ENCODE measurements at regions of chr9 and their contacts with region 1.

Region 1: DNA sequence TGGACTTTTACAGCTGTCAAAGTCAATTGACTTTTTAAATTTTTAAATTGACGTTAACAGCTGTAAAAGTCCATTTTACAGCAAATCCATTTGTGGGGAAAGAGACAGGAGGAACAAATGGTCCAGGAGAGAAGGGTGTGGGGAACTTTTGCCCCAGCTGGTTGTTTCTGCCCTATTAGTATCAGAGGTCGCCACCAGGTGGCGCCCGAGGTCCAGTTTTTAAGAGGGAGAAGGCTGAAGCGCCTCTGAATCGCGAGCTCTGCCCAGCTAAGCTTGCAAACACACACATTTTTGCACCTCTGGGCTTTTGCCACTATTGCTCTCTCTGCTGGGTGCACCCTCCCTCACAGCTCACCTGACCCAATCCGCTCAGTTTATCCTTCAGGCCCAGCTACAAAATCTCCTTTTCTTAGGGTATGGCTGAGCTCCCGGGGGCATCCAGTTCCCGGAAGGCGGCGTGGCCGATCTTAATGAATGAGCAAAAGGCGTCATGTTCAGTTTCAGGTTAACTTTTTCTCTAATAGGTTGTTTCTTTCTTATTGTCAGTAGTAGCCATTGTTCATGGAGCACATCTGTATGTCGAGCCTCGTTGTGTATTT is 6.3 kb upstream of the TTLL11 start:
- DNase-seq: peak; percentile 69 to 71
- ATAC-seq: peak; percentile 81 to 92
- H3K4me3 ChIP-seq: no peak overlapping the region
- H3K27ac ChIP-seq: no peak overlapping the region
- H3K4me1 ChIP-seq: no peaks in the 10 kb centered on the region
- CTCF ChIP-seq: peak; percentile 89
- EP300 ChIP-seq: no peak
- POLR2A ChIP-seq: no peak
- RAD21 ChIP-seq: peak; percentile 82 to 84

Region 2: GRCh38 chr9:121584411-121584810 is 515.0 kb before region 1 on chr9:
- CTCF ChIA-PET with region 1: no interaction called
- POLR2A ChIA-PET with region 1: no interaction called
- DNase-seq: no peak
- ATAC-seq: no peak
- H3K4me3 ChIP-seq: no peak overlapping the region
- H3K27ac ChIP-seq: no peak overlapping the region
- H3K4me1 ChIP-seq: no peaks in the 10 kb centered on the region
- CTCF ChIP-seq: no peak
- EP300 ChIP-seq: no peak
- POLR2A ChIP-seq: no peak
- RAD21 ChIP-seq: no peak

Region 3: DNA sequence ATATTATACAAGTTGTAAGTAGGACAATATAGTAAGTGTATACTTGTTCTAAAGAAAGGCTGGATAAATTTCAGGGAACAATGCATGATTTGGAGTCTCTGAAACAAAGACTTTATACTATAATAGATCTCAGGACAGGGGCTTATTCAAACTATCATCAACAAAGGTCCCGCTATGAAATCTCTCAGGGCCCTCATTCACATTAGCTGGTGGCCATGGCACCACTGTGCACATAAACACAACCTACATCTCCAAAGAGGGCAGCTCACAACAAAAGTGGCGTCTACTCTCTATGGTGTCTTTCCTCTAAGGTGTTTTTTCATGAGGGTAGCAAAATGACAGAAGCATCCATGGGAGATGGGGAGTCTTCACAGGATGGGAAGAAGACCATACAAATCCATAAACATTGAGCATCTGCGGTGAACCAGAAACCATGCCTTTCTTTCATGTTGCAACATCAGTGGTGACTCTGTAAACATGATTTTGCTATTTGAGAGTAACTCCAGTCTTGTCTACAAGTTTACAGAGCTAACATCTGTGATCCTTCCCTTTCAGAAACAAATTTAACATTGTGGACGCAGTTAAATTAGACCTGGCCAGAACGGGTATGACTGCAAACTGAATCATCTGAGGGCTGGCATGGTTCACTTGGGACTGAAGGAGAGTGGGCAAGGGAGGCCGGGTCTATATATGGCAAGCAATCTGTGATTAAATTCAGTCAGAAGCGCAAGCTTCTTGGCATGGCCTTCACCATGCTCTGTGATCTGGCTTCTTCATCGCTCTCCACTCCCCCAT is 11.8 kb before region 1 on chr9:
- CTCF ChIA-PET with region 1: interaction called, 26 read pairs
- POLR2A ChIA-PET with region 1: no interaction called
- DNase-seq: no peak
- ATAC-seq: no peak
- H3K4me3 ChIP-seq: no peak overlapping the region
- H3K27ac ChIP-seq: no peak overlapping the region
- H3K4me1 ChIP-seq: peaks cover 6% of the 10 kb centered on the region; the same call in 2 of the 3 replicates
- CTCF ChIP-seq: no peak
- EP300 ChIP-seq: no peak
- POLR2A ChIP-seq: no peak
- RAD21 ChIP-seq: no peak

Region 4: GRCh38 chr9:122131401-122132001 is 32.1 kb after region 1 on chr9:
- CTCF ChIA-PET with region 1: interaction called, 385 read pairs
- POLR2A ChIA-PET with region 1: no interaction called
- DNase-seq: no peak
- ATAC-seq: peak in 1 of 2 experiments; percentile 17; a peak in 1 of 6 replicates
- H3K4me3 ChIP-seq: no peak overlapping the region
- H3K27ac ChIP-seq: no peak overlapping the region
- H3K4me1 ChIP-seq: no peaks in the 10 kb centered on the region; the same call in 2 of the 3 replicates
- CTCF ChIP-seq: no peak
- EP300 ChIP-seq: no peak
- POLR2A ChIP-seq: no peak
- RAD21 ChIP-seq: no peak

Region 5: GRCh38 chr9:122264360-122265148 is 165.2 kb after region 1 on chr9 and contains the starts of genes MRRF and RBM18:
- CTCF ChIA-PET with region 1: interaction called, 10 read pairs
- POLR2A ChIA-PET with region 1: no interaction called
- DNase-seq: peak; percentile 82 to 95
- ATAC-seq: peak; percentile 89 to 92
- H3K4me3 ChIP-seq: peak within 1 kb of the TSS; percentile 62
- H3K27ac ChIP-seq: peak within 1 kb of the TSS; percentile 86 to 98
- H3K4me1 ChIP-seq: peaks cover 20% of the 10 kb centered on the region
- CTCF ChIP-seq: no peak
- EP300 ChIP-seq: no peak
- POLR2A ChIP-seq: peak; percentile 73
- RAD21 ChIP-seq: no peak
- polyA plus RNA-seq, gene MRRF: 107 and 115 TPM in 2 replicates
- polyA plus RNA-seq, gene RBM18: 41.1 and 52.3 TPM in 2 replicates

Region 6: DNA sequence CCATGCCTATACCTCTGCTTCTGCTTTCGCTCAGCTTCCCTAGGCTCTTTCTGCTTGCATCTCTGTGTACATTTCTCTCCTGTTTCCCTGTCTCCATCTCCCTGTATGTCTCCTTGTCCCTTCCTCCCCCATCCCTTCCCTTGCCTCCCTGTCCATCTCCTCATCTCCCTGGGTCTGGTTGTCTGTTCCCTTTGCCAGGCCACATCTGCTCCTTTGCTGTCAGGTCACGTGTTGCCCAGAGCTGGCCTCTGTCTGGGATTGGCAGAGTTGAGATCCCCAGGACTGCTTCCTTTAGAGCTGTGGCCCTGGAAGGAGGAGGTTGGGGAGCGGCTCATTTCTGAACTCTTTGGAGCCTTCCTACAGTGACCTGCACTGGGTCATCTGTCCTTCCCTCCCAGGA is 239.6 kb after region 1 on chr9:
- CTCF ChIA-PET with region 1: interaction called, 232 read pairs
- POLR2A ChIA-PET with region 1: no interaction called
- DNase-seq: no peak
- ATAC-seq: peak in 1 of 2 experiments; percentile 10; a peak in 2 of 6 replicates
- H3K4me3 ChIP-seq: no peak overlapping the region
- H3K27ac ChIP-seq: no peak overlapping the region
- H3K4me1 ChIP-seq: no peaks in the 10 kb centered on the region
- CTCF ChIP-seq: no peak
- EP300 ChIP-seq: no peak
- POLR2A ChIP-seq: no peak
- RAD21 ChIP-seq: no peak

Region 7: GRCh38 chr9:122453677-122454135 is 354.3 kb after region 1 on chr9:
- CTCF ChIA-PET with region 1: interaction called, 18 read pairs
- POLR2A ChIA-PET with region 1: no interaction called
- DNase-seq: no peak
- ATAC-seq: no peak
- H3K4me3 ChIP-seq: no peak overlapping the region
- H3K27ac ChIP-seq: no peak overlapping the region
- H3K4me1 ChIP-seq: no peaks in the 10 kb centered on the region
- CTCF ChIP-seq: no peak
- EP300 ChIP-seq: no peak
- POLR2A ChIP-seq: no peak
- RAD21 ChIP-seq: no peak

Region 8: GRCh38 chr9:122810306-122810946 is 711.1 kb after region 1 on chr9:
- CTCF ChIA-PET with region 1: interaction called, 53 read pairs
- POLR2A ChIA-PET with region 1: no interaction called
- DNase-seq: peak; percentile 78 to 82
- ATAC-seq: peak; percentile 91 to 97
- H3K4me3 ChIP-seq: no peak overlapping the region
- H3K27ac ChIP-seq: no peak overlapping the region
- H3K4me1 ChIP-seq: 0 out of 3 replicates have a peak, but pooled peaks cover 4% of the 10 kb centered on the region
- CTCF ChIP-seq: peak; percentile 91
- EP300 ChIP-seq: no peak
- POLR2A ChIP-seq: no peak
- RAD21 ChIP-seq: peak; percentile 96 to 98

Measured in A549 (cell line).